Tibial artery (tissue), 4 donors: ENCODE measurements at regions of chr10 and their contacts with region 1.

Region 1: GRCh38 chr10:689433-690371 is at the start of gene DIP2C:
- DNase-seq: peak; percentile 56 to 85
- H3K4me3 ChIP-seq: peak within 1 kb of the TSS; percentile 67 to 93
- H3K27ac ChIP-seq: peak within 1 kb of the TSS; percentile 94 to 95
- H3K4me1 ChIP-seq: peaks cover 0 to 47% (median 19%) of the 10 kb centered on the region in 4 donors
- H3K27me3 ChIP-seq: no peaks in the 10 kb centered on the region
- CTCF ChIP-seq: no peak

Region 2: GRCh38 chr10:511101-511848 is 178.4 kb before region 1 on chr10:
- intact Hi-C with region 1: loop called (anchors 5 kb)
- DNase-seq: peak; percentile 89 to 95
- H3K4me3 ChIP-seq: no peak overlapping the region
- H3K27ac ChIP-seq: peak overlapping the region; percentile 31 to 32
- H3K4me1 ChIP-seq: peaks cover 0 to 34% (median 17%) of the 10 kb centered on the region in 4 donors
- H3K27me3 ChIP-seq: no peaks in the 10 kb centered on the region
- CTCF ChIP-seq: peak; percentile 93 to 95

Region 3: GRCh38 chr10:598415-599170 is 91.1 kb before region 1 on chr10:
- intact Hi-C with region 1: loop called (anchors 10 kb)
- DNase-seq: peak in 1 of 2 donors; percentile 58
- H3K4me3 ChIP-seq: no peak overlapping the region
- H3K27ac ChIP-seq: peak overlapping the region; percentile 82 to 93
- H3K4me1 ChIP-seq: peaks cover 0 to 70% (median 46%) of the 10 kb centered on the region in 4 donors
- H3K27me3 ChIP-seq: no peaks in the 10 kb centered on the region
- CTCF ChIP-seq: no peak

Region 4: GRCh38 chr10:633279-634245 is 56.1 kb before region 1 on chr10:
- intact Hi-C with region 1: no loop called
- DNase-seq: peak in 1 of 2 donors; percentile 86
- H3K4me3 ChIP-seq: peak overlapping the region; percentile 32 to 35
- H3K27ac ChIP-seq: peak overlapping the region; percentile 70 to 74
- H3K4me1 ChIP-seq: peaks cover 0 to 30% (median 11%) of the 10 kb centered on the region in 4 donors
- H3K27me3 ChIP-seq: no peaks in the 10 kb centered on the region
- CTCF ChIP-seq: no peak

Region 5: GRCh38 chr10:784403-785088 is 94.8 kb after region 1 on chr10:
- intact Hi-C with region 1: loop called (anchors 5 kb)
- DNase-seq: peak; percentile 54 to 85
- H3K4me3 ChIP-seq: peak overlapping the region; percentile 45 to 50
- H3K27ac ChIP-seq: no peak overlapping the region
- H3K4me1 ChIP-seq: peaks cover 0 to 22% (median 17%) of the 10 kb centered on the region in 4 donors
- H3K27me3 ChIP-seq: peaks cover 0 to 2% of the 10 kb centered on the region in 2 donors
- CTCF ChIP-seq: peak; percentile 25 to 29